IMR-90 (cell line): ENCODE measurements at regions of chr10 and their contacts with region 1.

Region 1: DNA sequence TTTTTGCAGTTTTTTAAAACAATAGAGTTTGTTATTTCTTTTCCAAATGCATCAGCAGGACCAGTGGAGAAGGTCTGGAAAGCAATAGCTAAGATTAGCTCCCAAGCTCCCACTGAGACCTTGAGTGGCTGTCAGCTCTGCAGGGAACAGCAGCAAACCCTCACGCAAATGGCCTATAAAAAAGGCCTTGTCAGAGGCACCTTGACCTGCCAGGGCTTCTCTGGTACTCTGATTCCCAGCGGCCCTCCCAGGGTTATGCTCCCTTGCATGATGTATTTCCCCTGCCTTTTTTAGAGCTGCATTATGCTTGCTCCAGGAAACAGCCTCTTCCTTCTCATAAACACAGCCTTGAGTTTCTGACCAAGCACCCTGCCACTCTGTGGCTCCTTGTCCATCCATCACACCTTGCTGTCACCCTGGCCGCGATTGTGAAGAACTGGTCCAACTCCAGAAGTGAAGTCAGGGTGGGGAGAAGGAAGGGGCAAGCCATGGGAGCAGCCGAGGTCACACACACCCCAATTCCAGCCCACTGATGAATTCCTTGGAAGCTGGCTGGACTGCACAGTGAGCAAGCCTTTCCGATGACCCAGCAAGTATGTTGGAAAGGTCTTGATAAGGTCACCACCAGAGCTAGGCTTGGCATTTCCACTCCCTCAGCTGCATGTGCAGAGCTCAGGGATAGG is 35.3 kb upstream of the NKX2-3 start:
- DNase-seq: no peak
- ATAC-seq: no peak
- H3K4me3 ChIP-seq: no peak overlapping the region
- H3K27ac ChIP-seq: no peak overlapping the region
- H3K4me1 ChIP-seq: no peaks in the 10 kb centered on the region
- H3K27me3 ChIP-seq: peaks cover 7% of the 10 kb centered on the region
- CTCF ChIP-seq: no peak
- POLR2A ChIP-seq: no peak
- RAD21 ChIP-seq: no peak

Region 2: GRCh38 chr10:99341860-99342490 is 155.5 kb before region 1 on chr10:
- CTCF ChIA-PET with region 1: no interaction called
- POLR2A ChIA-PET with region 1: no interaction called
- dilution Hi-C with region 1: no loop called
- in situ Hi-C with region 1: no loop called
- intact Hi-C with region 1: no loop called
- DNase-seq: peak; percentile 45
- ATAC-seq: no peak
- H3K4me3 ChIP-seq: no peak overlapping the region
- H3K27ac ChIP-seq: no peak overlapping the region
- H3K4me1 ChIP-seq: peaks cover 2% of the 10 kb centered on the region; the same call in 1 of the 2 replicates
- H3K27me3 ChIP-seq: no peaks in the 10 kb centered on the region
- CTCF ChIP-seq: no peak
- POLR2A ChIP-seq: no peak
- RAD21 ChIP-seq: no peak

Region 3: DNA sequence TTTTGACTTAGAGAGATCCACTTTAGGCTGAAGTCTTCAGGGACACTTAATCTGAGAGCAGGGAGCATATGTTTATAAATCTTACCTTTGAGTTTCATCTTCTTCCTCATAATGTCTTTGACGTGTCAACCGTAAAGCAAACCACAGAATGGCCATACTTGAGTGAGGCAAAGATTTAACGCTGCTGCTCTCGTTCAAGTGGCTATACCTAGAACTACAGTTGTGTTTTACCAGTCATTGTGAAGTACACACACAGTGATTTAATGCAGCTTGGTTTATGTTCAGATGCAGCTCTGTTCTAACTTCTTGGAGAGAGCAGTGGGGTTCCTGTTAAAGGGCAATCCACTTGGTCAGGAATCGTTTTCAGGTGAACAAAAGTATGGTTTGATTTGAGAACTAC is 27.2 kb before region 1 on chr10:
- CTCF ChIA-PET with region 1: no interaction called
- POLR2A ChIA-PET with region 1: no interaction called
- dilution Hi-C with region 1: no loop called
- in situ Hi-C with region 1: no loop called
- intact Hi-C with region 1: loop called (anchors 2 kb)
- DNase-seq: no peak
- ATAC-seq: no peak
- H3K4me3 ChIP-seq: no peak overlapping the region
- H3K27ac ChIP-seq: no peak overlapping the region
- H3K4me1 ChIP-seq: no peaks in the 10 kb centered on the region; the same call in 1 of the 2 replicates
- H3K27me3 ChIP-seq: peaks cover 13% of the 10 kb centered on the region
- CTCF ChIP-seq: no peak
- POLR2A ChIP-seq: no peak
- RAD21 ChIP-seq: no peak